ENCODE measurements at regions of chr2 and their contacts with region 1.

Region 1: DNA sequence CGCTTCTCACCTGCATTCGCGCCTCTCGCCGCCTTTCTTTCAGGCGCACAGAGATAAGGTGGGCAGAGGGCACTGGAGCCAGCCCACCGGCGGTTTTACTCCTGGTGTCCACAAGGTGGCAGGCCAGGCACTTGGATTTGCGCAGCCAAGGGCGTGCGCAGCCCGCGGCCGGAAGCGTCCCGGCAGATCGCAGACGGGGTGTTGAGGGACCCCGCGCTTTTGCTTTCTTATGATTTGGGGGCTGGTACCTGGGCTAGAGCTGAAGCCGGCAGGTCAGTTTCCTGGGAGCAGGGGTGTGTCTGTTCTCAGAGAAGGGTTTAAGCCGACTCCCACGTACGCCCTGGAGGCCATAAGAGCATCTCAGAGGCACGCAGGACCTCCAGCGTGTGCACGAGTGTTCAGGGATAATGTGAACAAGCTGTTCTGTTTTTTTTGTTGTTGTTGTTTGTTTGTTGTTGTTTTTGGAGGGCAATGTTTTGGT is 305.6 kb upstream of the CXCR4 start:
- DNase-seq: peak; percentile 65
- H3K4me3 Mint-ChIP-seq: peak overlapping the region; percentile 74
- H3K27ac Mint-ChIP-seq: no peak overlapping the region
- H3K4me1 Mint-ChIP-seq: peaks cover 6% of the 10 kb centered on the region
- H3K27me3 Mint-ChIP-seq: peaks cover 60% of the 10 kb centered on the region
- CTCF ChIP-seq: peak; percentile 91

Region 2: GRCh38 chr2:136052369-136053362 is 370.9 kb before region 1 on chr2:
- CTCF ChIA-PET with region 1: no interaction called
- POLR2A ChIA-PET with region 1: no interaction called
- intact Hi-C with region 1: no loop called
- DNase-seq: no peak
- H3K4me3 Mint-ChIP-seq: no peak overlapping the region
- H3K27ac Mint-ChIP-seq: no peak overlapping the region
- H3K4me1 Mint-ChIP-seq: no peaks in the 10 kb centered on the region
- H3K27me3 Mint-ChIP-seq: no peaks in the 10 kb centered on the region
- CTCF ChIP-seq: no peak

Region 3: DNA sequence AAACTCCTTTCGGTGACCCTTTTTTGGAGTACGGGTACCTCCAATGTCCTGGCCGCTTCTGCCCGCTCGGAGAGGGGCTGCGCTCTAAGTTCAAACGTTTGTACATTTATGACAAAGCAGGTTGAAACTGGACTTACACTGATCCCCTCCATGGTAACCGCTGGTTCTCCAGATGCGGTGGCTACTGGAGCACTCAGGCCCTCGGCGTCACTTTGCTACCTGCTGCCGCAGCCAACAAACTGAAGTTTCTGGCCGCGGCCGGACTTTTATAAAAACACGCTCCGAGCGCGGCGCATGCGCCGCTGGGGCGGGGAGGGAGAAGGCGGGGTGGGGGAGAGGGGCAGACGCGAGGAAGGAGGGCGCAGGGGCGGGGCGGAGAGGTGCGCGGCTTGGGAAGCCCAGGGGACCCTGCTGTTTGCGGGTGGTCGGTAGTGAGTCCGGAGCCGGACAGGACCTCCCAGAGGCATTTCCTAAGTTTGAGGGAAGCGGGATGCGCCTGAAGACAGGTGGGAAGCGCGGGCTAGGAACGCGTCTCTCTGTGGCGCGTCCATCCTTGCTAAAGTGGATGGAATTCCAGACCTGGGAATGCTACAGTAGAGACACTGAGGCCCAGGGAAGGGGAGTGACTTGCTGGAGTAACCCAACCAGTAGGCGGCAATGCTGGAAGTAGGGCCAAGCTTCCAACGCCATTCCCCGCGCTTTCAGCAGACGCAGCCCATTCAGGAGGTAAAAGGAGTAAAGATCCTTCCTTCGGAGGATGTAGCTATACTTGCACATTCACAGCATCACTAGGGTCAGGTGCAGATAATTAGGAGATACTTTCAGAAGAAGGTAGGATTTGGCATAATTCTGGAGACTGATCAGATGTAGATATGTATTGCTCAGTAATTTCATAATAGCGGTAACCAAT is 305.4 kb before region 1 on chr2 and contains the start of gene CXCR4:
- CTCF ChIA-PET with region 1: no interaction called
- POLR2A ChIA-PET with region 1: no interaction called
- intact Hi-C with region 1: no loop called
- DNase-seq: peak; percentile 38
- H3K4me3 Mint-ChIP-seq: peak within 1 kb of the TSS; percentile 87
- H3K27ac Mint-ChIP-seq: no peak within 1 kb of the TSS
- H3K4me1 Mint-ChIP-seq: peaks cover 15% of the 10 kb centered on the region
- H3K27me3 Mint-ChIP-seq: no peaks in the 10 kb centered on the region
- CTCF ChIP-seq: no peak
- total RNA-seq, gene CXCR4: 0.54 and 1.1 TPM in 2 replicates

Region 4: GRCh38 chr2:136281281-136282114 is 142.1 kb before region 1 on chr2:
- CTCF ChIA-PET with region 1: no interaction called
- POLR2A ChIA-PET with region 1: no interaction called
- intact Hi-C with region 1: no loop called
- DNase-seq: no peak
- H3K4me3 Mint-ChIP-seq: no peak overlapping the region
- H3K27ac Mint-ChIP-seq: no peak overlapping the region
- H3K4me1 Mint-ChIP-seq: no peaks in the 10 kb centered on the region
- H3K27me3 Mint-ChIP-seq: no peaks in the 10 kb centered on the region
- CTCF ChIP-seq: no peak

Region 5: DNA sequence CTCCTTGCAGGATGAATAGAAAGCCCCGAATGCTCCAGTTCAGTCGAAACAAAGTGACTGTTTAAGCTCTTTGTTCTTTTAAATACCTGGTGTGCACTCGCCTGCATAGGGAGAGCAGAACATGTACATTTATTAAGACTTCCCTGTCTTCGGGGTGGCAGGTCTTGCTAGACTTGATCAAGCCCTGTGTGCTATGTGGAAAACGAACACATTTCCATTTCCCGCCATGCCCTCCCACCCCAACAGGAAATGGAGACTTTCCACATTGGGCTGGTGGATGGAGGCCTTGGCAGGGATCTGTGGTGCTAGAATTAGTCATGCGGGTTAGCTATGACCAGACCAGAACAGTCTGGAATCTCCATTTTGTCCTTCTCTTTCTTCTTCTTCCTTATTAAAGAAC is 20.8 kb after region 1 on chr2:
- CTCF ChIA-PET with region 1: interaction called, 13 read pairs
- POLR2A ChIA-PET with region 1: no interaction called
- intact Hi-C with region 1: no loop called
- DNase-seq: no peak
- H3K4me3 Mint-ChIP-seq: no peak overlapping the region
- H3K27ac Mint-ChIP-seq: no peak overlapping the region
- H3K4me1 Mint-ChIP-seq: no peaks in the 10 kb centered on the region
- H3K27me3 Mint-ChIP-seq: peaks cover 40% of the 10 kb centered on the region
- CTCF ChIP-seq: no peak

Region 6: DNA sequence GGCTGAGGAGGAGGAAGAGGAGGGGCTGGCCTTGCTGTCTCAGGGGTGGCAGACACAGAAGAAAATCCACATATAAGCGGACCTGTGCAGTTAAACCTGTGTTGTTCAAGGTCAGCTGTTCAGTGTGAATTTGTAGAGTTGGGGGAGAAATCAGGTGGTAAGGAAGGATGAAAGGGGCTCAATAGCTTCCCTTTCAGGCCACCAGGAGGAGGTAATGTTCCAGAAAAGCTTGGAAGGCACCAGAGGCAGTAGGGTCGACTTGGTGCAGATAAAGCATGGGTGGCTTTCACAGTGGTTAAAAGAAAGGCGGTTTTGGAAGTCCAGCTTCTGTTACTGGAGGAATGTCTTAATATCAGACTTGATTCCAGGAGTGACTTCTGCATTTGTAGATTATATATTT is 509.1 kb after region 1 on chr2:
- CTCF ChIA-PET with region 1: no interaction called
- POLR2A ChIA-PET with region 1: no interaction called
- intact Hi-C with region 1: loop called (anchors 5 kb)
- DNase-seq: peak; percentile 56
- H3K4me3 Mint-ChIP-seq: no peak overlapping the region
- H3K27ac Mint-ChIP-seq: no peak overlapping the region
- H3K4me1 Mint-ChIP-seq: no peaks in the 10 kb centered on the region
- H3K27me3 Mint-ChIP-seq: no peaks in the 10 kb centered on the region
- CTCF ChIP-seq: peak; percentile 64

Region 7: GRCh38 chr2:137659612-137660011 is 1236.1 kb after region 1 on chr2:
- CTCF ChIA-PET with region 1: interaction called, 38 read pairs
- POLR2A ChIA-PET with region 1: interaction called, 3 read pairs
- intact Hi-C with region 1: loop called (anchors 1 kb)
- DNase-seq: peak; percentile 68
- H3K4me3 Mint-ChIP-seq: no peak overlapping the region
- H3K27ac Mint-ChIP-seq: no peak overlapping the region
- H3K4me1 Mint-ChIP-seq: no peaks in the 10 kb centered on the region
- H3K27me3 Mint-ChIP-seq: no peaks in the 10 kb centered on the region
- CTCF ChIP-seq: peak; percentile 53

Region 8: DNA sequence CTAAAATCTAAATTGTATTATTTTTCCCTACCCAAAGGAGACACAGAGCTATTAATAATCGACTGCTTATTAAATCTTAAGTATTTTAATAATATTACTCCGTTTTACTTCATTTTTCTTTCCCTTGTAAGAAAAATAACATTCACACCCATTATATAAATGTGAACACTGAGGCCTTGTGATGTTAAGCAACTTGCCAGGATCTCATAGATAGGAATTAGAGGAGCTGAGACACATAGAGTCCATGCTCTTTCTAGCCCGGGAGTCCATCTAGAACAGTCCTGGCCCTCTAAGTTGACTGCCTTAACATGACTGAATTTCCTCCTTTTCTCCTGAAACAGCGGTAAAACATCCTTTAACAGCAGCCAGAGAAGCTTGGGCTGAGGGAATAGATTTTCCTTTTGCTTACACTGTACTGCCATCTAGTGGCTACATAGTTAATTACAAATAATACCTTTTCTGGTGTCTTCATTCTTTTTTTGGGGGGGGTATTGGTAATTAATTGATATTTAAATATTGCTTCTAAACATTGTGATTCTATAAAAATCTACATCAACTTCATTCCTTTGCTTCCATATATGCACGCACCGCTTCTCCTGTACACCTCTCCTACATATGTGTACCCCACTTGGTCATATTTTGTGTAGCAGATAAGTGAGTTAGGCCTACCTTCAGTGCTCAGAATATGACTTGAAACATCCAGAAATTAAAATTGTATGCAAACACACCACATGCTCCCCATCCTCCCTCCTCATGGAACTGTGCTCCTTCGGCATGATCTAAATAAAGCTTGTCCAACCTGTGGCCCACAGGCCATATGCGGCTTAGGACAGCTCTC is 1414.9 kb after region 1 on chr2:
- CTCF ChIA-PET with region 1: interaction called, 41 read pairs
- POLR2A ChIA-PET with region 1: no interaction called
- intact Hi-C with region 1: loop called (anchors 1 kb)
- DNase-seq: peak; percentile 57
- H3K4me3 Mint-ChIP-seq: no peak overlapping the region
- H3K27ac Mint-ChIP-seq: no peak overlapping the region
- H3K4me1 Mint-ChIP-seq: no peaks in the 10 kb centered on the region
- H3K27me3 Mint-ChIP-seq: no peaks in the 10 kb centered on the region
- CTCF ChIP-seq: peak; percentile 57

Measured in MCF 10A (cell line).